ENCODE measurements at regions of chr17 and their contacts with region 1.

Region 1: DNA sequence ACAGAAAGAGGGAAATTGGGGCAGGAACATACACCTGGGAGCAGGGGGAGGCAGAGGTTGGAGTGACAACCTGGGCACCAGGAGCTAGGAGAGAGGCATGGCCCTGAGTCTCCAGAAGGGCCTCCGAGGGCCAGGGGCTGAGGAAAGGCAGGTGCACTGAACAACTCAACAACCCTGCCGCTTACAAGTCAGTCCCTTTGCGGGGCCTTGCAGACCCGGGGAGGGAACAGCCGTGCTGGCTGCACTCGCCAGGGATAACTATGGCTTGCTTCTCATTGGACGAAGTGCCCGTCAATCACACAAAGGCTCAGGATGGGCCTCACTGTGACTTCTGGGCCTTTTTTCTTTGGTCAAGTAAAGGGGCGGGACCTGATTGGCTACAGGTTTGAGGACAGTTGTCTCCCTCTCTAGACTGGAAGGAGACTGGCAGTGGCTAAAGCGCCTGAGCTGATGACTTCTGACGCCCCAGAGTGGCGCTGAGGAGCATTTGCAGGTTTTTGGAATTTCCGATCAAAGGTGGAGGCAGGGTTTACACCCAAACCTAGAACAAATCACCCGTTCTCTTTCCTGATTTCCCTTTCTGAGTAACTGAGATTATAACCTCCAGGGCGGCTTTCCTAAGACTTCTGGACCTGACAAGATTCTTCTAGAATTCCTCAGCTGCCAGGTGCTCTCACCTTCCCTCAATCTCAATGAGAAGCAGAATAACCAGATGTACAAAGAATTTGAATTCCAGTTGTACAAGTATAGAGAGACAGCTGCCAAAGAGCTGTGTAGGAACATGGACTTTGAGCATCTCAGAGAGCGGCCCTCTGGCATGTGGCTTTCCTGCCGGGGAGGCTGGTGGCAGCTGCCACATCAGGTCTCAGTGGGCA is 27.6 kb upstream of the ST6GALNAC2 start:
- DNase-seq: peak; percentile 94
- ATAC-seq: peak; percentile 95
- H3K4me3 ChIP-seq: peak overlapping the region; percentile 17 to 70 (median 32)
- H3K27ac ChIP-seq: peak overlapping the region; percentile 57
- H3K4me1 ChIP-seq: peaks cover 34% of the 10 kb centered on the region
- H3K27me3 ChIP-seq: peaks cover 0 to 6% of the 10 kb centered on the region in 2 experiments; a peak in 1 of 5 replicates
- CTCF ChIP-seq: peak; percentile 71
- EP300 ChIP-seq: no peak
- POLR2A ChIP-seq: no peak
- RAD21 ChIP-seq: peak; percentile 57

Region 2: GRCh38 chr17:76585818-76586593 is 27.2 kb before region 1 on chr17 and contains the start of gene ST6GALNAC2:
- CTCF ChIA-PET with region 1: no interaction called
- POLR2A ChIA-PET with region 1: interaction called, 4 read pairs
- in situ Hi-C with region 1: loop called (anchors 5 kb)
- intact Hi-C with region 1: no loop called
- DNase-seq: peak; percentile 66
- ATAC-seq: peak; percentile 93
- H3K4me3 ChIP-seq: peak within 1 kb of the TSS; percentile 55 to 72 (median 58)
- H3K27ac ChIP-seq: no peak within 1 kb of the TSS
- H3K4me1 ChIP-seq: peaks cover 53% of the 10 kb centered on the region
- H3K27me3 ChIP-seq: peaks cover 11 to 40% of the 10 kb centered on the region in 2 experiments; a peak in 4 of 5 replicates
- CTCF ChIP-seq: peak; percentile 90
- EP300 ChIP-seq: no peak
- POLR2A ChIP-seq: no peak
- RAD21 ChIP-seq: peak; percentile 98
- total RNA-seq, gene ST6GALNAC2: 0.49 and 0.84 TPM in 2 replicates

Region 3: DNA sequence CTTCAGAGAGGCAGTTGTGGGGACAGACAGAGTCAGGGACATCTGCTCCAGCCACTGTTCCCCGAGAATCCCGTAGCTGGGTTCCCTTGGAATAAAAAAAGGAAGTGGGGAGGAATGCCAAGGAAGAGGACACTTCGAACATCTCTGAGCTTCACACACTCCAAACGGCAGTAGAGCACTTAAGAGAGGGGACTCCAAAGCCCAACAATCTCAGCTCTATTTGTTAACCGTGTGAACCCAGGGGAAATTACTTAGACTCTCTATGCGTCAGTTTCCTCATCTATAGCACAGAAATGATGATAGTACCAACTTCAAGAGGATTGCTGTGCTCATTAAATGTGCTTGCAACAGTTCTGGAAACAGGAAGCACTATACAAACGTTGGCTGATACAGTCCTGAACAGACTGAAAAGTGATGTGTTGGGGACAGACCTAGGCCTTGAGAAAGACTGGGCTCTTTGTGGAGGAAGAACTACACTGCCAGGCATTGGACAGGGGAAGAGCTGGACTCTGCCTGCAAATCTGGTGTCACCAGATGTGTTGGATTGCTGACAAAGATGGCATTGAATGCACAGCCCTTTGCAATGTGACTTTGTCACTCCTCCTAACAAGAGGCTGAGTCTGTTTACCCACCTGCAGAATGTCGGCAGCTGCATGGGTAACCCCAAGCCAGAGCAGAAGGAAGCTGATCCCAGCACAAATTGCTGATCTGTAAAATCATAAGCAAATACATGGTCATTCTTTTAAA is 15.3 kb before region 1 on chr17:
- CTCF ChIA-PET with region 1: no interaction called
- POLR2A ChIA-PET with region 1: interaction called, 39 read pairs
- in situ Hi-C with region 1: no loop called
- intact Hi-C with region 1: no loop called
- DNase-seq: peak; percentile 67
- ATAC-seq: peak; percentile 71
- H3K4me3 ChIP-seq: peak overlapping the region in 1 of 3 experiments; percentile 38; a peak in 2 of 6 replicates
- H3K27ac ChIP-seq: peak overlapping the region; percentile 65
- H3K4me1 ChIP-seq: peaks cover 77% of the 10 kb centered on the region
- H3K27me3 ChIP-seq: no peaks in the 10 kb centered on the region
- CTCF ChIP-seq: no peak
- EP300 ChIP-seq: no peak
- POLR2A ChIP-seq: no peak
- RAD21 ChIP-seq: no peak

Measured in HepG2 (cell line).